ENCODE measurements at regions of chr2 and their contacts with region 1.

Region 1: DNA sequence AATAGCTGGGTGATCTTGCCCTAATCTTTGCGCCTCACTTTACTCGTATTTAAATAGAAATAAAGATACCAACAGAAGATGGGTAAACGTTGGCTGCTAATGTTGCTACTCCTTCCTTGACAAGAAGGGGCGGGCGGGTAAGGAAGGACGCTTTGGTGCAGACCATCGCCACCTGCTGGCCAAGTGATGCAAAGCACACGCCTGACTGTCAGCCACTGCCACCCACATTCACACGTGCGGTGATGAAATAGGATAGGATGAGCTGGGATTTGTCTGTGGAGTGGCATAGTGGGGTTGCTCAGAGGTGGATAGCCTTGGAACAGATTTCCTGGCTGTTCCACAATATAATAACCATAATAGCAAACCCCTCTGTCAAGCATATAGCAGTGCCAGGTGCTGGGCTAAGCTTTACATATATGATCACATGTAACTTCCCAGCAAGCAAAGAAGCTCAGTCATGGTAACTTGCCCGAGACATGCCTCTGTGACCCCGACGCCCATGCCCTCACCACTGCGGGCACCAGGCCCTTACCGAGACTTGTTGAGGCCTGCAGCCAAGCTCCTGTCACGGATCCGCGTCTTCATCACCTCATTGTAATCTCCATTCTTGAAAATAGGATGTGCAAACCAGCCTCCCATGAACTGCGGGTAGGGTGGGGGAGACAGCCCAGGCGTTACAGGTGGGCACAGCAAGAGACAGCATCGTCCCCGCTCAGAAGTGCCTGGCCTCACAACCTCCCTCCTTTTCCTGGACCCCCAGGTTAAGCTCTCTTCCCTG is 39.3 kb downstream of the LCT start:
- DNase-seq: peak; percentile 66
- H3K4me3 ChIP-seq: no peak overlapping the region
- H3K27ac ChIP-seq: no peak overlapping the region
- H3K4me1 ChIP-seq: peaks cover 8% of the 10 kb centered on the region
- H3K27me3 ChIP-seq: no peaks in the 10 kb centered on the region
- CTCF ChIP-seq: peak; percentile 94 to 99

Region 2: GRCh38 chr2:135304694-135305093 is 493.0 kb before region 1 on chr2:
- CTCF ChIA-PET with region 1: no interaction called
- dilution Hi-C with region 1: no loop called
- in situ Hi-C with region 1: no loop called
- intact Hi-C with region 1: no loop called
- DNase-seq: no peak
- H3K4me3 ChIP-seq: no peak overlapping the region
- H3K27ac ChIP-seq: no peak overlapping the region
- H3K4me1 ChIP-seq: peaks cover 10% of the 10 kb centered on the region
- H3K27me3 ChIP-seq: no peaks in the 10 kb centered on the region
- CTCF ChIP-seq: no peak

Region 3: DNA sequence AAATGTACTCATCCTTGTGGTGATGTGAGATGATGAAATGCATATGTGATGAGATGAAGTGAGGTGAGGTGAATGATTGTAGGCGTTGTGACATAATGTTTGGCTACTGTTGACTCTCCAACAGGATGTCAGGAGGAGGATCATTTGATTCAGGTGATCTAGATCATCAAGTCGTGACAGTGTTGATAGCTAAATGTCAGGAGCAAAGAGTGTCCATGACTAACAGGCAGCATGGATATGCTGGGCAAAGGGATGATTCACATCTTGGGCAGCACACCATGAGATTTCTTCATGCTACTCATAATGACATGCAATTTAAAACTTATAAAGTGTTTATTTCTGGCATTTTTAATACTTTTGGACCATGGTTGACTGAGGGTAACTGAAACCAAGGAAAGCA is 96.2 kb before region 1 on chr2:
- CTCF ChIA-PET with region 1: no interaction called
- dilution Hi-C with region 1: no loop called
- in situ Hi-C with region 1: no loop called
- intact Hi-C with region 1: no loop called
- DNase-seq: peak; percentile 63
- H3K4me3 ChIP-seq: no peak overlapping the region
- H3K27ac ChIP-seq: no peak overlapping the region
- H3K4me1 ChIP-seq: no peaks in the 10 kb centered on the region
- H3K27me3 ChIP-seq: no peaks in the 10 kb centered on the region
- CTCF ChIP-seq: no peak

Region 4: GRCh38 chr2:135741395-135742324 is 56.0 kb before region 1 on chr2 and contains the start of gene UBXN4:
- CTCF ChIA-PET with region 1: interaction called, 10 read pairs
- dilution Hi-C with region 1: no loop called
- in situ Hi-C with region 1: no loop called
- intact Hi-C with region 1: loop called (anchors 1 kb)
- DNase-seq: peak; percentile 99
- H3K4me3 ChIP-seq: peak within 1 kb of the TSS; percentile 72 to 97 (median 94)
- H3K27ac ChIP-seq: peak within 1 kb of the TSS; percentile 91
- H3K4me1 ChIP-seq: peaks cover 19% of the 10 kb centered on the region
- H3K27me3 ChIP-seq: no peaks in the 10 kb centered on the region
- CTCF ChIP-seq: peak; percentile 34 to 43
- total RNA-seq, gene UBXN4: 72.2 to 72.9 TPM

Region 5: DNA sequence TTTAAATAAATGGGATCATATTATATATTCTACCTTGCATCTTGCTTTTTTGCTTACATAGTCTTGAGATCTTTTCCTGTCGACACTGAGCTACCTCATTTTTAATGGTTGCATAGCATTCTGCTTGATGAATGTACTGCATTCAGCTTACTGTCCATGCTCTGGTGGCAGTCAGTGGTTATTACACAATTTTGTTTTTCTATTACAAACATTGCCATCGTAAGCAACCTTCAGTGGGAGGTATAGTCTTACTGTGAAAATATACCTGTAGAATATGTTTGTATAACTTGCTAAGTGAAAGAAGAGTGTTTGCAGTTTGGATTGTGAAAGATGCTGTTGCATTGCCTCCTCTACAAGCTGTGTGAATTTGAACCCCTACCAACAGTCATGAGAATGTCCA is 12.7 kb before region 1 on chr2:
- CTCF ChIA-PET with region 1: no interaction called
- dilution Hi-C with region 1: no loop called
- in situ Hi-C with region 1: no loop called
- intact Hi-C with region 1: loop called (anchors 1 kb)
- DNase-seq: no peak
- H3K4me3 ChIP-seq: no peak overlapping the region
- H3K27ac ChIP-seq: no peak overlapping the region
- H3K4me1 ChIP-seq: peaks cover 6% of the 10 kb centered on the region
- H3K27me3 ChIP-seq: no peaks in the 10 kb centered on the region
- CTCF ChIP-seq: peak in 1 of 2 donors; percentile 24

Region 6: GRCh38 chr2:136384531-136385303 is 587.0 kb after region 1 on chr2:
- CTCF ChIA-PET with region 1: no interaction called
- dilution Hi-C with region 1: no loop called
- in situ Hi-C with region 1: no loop called
- intact Hi-C with region 1: loop called (anchors 1 kb)
- DNase-seq: peak; percentile 40
- H3K4me3 ChIP-seq: no peak overlapping the region
- H3K27ac ChIP-seq: no peak overlapping the region
- H3K4me1 ChIP-seq: no peaks in the 10 kb centered on the region
- H3K27me3 ChIP-seq: peaks cover 2% of the 10 kb centered on the region
- CTCF ChIP-seq: peak; percentile 58 to 64